ENCODE measurements at regions of chr21 and their contacts with region 1.

Region 1: DNA sequence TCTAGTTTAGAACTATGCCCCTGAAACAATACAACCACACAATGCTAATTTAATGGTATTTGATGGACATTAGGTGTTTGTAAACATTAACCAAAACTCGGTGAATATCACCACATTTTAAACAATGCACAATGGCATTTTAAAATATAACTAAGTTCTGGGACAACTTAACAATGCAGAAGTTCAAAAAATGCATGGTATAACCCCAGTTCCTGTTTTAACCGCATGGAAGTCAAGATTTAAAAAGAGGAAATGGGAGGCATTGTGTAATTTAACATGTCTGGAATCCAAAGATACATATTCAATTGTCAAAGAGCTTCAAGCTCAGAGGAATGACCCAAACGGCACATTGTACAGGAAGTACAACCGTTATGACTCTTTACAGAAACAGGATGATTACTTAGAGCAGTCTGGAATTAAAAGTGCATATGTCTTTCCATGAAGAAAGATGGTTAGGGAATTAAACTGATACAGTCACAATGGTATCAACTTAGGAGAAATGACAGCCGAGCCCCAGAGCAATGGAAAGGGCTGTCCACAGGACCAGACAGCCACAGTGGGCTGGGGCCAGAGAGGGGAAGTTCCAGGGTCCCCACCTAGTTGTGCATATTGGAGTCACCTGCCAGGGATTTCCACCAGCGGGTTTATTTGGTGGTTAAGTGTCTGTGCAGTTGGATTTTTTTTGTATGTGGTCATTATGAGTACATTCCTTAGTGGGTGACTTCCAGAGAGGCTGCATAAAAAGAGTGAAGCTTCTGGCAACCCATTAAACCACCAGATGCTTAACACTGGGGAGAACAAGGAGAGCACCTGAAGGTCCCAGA is 7.5 kb upstream of the PTTG1IP start:
- DNase-seq: peak; percentile 90 to 99 (median 95)
- H3K4me3 ChIP-seq: peak overlapping the region in 1 of 3 experiments; percentile 58
- H3K4me3 Mint-ChIP-seq: peak overlapping the region; percentile 27 to 75
- H3K27ac ChIP-seq: peak overlapping the region; percentile 72 to 88
- H3K27ac Mint-ChIP-seq: peak overlapping the region; percentile 93 to 99 (median 96)
- H3K4me1 ChIP-seq: peaks cover 83% of the 10 kb centered on the region in 2 donors
- H3K4me1 Mint-ChIP-seq: peaks cover 81% of the 10 kb centered on the region
- H3K27me3 ChIP-seq: no peaks in the 10 kb centered on the region
- H3K27me3 Mint-ChIP-seq: peaks cover 0 to 3% (median 0%) of the 10 kb centered on the region in 3 donors
- CTCF ChIP-seq: no peak

Region 2: DNA sequence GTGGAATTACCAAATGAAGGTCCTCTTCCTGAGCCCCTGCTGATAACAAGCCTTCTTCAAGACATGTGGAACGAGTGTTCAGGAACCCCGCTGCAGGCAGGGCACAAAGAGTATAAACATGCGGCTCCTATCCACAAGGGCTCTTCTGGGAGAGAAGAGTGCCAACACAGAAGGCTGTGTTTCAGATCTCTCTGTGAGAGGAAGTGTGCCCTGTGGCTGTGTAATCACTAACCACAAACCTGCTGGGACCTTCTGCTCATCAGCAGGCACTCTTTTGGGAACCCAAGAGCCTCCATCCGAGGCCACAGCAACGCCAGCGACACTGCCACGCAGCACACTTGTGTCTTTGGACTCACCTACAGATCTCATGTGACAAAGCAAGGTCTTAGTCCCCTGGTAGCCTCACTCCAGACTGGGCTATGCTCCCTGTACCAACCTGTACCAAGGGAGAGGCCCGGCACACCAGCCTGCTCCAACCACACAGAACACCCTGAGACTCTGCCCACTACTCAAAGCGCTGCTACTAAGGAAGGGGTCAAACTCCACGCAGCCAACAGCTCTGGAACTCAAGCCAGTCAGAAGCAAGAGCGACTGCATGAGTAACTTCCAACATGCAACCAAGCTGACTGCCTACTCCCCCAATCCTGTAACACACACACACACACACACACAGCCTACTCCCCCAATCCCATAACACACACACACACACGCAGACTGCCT is 15.3 kb before region 1 on chr21:
- intact Hi-C with region 1: loop called in 1 of 2 experiments (anchors 2 kb)
- DNase-seq: peak; percentile 67 to 79 (median 76)
- H3K4me3 ChIP-seq: peak overlapping the region in 1 of 3 experiments; percentile 44
- H3K4me3 Mint-ChIP-seq: peak overlapping the region; percentile 31 to 68
- H3K27ac ChIP-seq: peak overlapping the region; percentile 53 to 74
- H3K27ac Mint-ChIP-seq: peak overlapping the region; percentile 60 to 91 (median 78)
- H3K4me1 ChIP-seq: peaks cover 57 to 58% of the 10 kb centered on the region in 2 donors
- H3K4me1 Mint-ChIP-seq: peaks cover 73% of the 10 kb centered on the region
- H3K27me3 ChIP-seq: no peaks in the 10 kb centered on the region
- H3K27me3 Mint-ChIP-seq: no peaks in the 10 kb centered on the region
- CTCF ChIP-seq: no peak

Region 3: DNA sequence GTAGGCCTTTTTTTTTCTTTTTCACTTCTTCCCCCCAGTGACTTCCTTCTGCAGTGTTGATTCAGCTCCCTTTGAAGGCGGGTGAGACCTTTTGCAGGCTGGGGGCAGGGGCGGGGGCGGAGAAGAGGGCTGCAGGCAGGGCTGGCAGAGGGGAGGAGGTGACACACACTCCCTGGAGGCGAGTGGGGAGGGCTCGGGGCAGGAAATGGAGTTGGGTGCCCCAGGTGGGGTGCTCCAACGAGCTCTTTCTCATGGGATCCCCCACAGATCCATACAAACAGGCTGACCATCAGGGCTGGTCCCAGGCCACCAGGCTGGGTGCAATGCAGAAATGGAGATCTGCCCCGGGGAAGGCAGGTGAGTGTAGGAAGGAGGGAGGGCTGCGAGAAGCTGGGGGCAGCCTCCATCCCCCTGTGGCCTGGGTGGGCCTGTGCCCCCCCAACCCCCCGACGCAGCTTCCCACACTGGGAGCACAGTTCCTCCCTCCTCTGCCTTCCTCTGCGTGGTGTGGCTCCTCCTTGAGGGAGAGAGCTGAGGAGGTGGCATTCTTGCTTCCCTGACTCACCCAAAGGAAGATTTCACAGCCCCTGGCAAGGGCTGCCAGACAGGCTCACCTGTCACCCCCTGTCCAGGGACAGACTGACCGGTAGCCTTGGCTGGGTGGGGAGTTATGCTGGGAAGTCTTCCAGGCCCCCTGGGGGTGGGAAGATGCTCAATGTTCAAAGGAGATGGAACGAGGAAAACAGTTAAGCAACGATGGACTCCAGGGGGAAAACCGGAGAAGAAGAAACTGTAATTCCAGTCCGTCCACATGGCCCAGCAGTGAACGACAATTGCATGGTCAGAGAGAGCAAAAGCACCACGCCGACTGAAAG is 46.9 kb after region 1 on chr21:
- intact Hi-C with region 1: loop called (anchors 2 to 5 kb)
- DNase-seq: peak; percentile 39 to 74 (median 49)
- H3K4me3 ChIP-seq: peak overlapping the region; percentile 61 to 81 (median 74)
- H3K4me3 Mint-ChIP-seq: peak overlapping the region; percentile 83 to 93
- H3K27ac ChIP-seq: peak overlapping the region; percentile 79 to 84
- H3K27ac Mint-ChIP-seq: peak overlapping the region; percentile 92 to 99 (median 95)
- H3K4me1 ChIP-seq: peaks cover 89 to 96% of the 10 kb centered on the region in 2 donors
- H3K4me1 Mint-ChIP-seq: peaks cover 83% of the 10 kb centered on the region
- H3K27me3 ChIP-seq: no peaks in the 10 kb centered on the region
- H3K27me3 Mint-ChIP-seq: peaks cover 0 to 2% (median 0%) of the 10 kb centered on the region in 3 donors
- CTCF ChIP-seq: no peak